Activated CD4-positive, alpha-beta memory T cell treated with anti-CD3 and anti-CD28 coated beads, Interleukin-2, amount 10 ng/mL, durations not matched to agents 7 days and 5 days (primary cell): ENCODE measurements at regions of chr11 and their contacts with region 1.

Region 1: GRCh38 chr11:4094348-4095291 is at the start of gene RRM1:
- DNase-seq: peak; percentile 94
- H3K4me3 Mint-ChIP-seq: peak within 1 kb of the TSS; percentile 99
- H3K27ac Mint-ChIP-seq: peak within 1 kb of the TSS; percentile 97
- H3K4me1 Mint-ChIP-seq: peaks cover 79% of the 10 kb centered on the region
- H3K27me3 Mint-ChIP-seq: no peaks in the 10 kb centered on the region
- total RNA-seq, gene RRM1: 156 to 161 TPM

Region 2: GRCh38 chr11:3849297-3849874 is 245.2 kb before region 1 on chr11:
- CTCF ChIA-PET with region 1: interaction called, 19 read pairs
- POLR2A ChIA-PET with region 1: interaction called, 79 read pairs
- DNase-seq: peak; percentile 48
- H3K4me3 Mint-ChIP-seq: no peak overlapping the region
- H3K27ac Mint-ChIP-seq: no peak overlapping the region
- H3K4me1 Mint-ChIP-seq: peaks cover 33% of the 10 kb centered on the region
- H3K27me3 Mint-ChIP-seq: peaks cover 3% of the 10 kb centered on the region

Region 3: DNA sequence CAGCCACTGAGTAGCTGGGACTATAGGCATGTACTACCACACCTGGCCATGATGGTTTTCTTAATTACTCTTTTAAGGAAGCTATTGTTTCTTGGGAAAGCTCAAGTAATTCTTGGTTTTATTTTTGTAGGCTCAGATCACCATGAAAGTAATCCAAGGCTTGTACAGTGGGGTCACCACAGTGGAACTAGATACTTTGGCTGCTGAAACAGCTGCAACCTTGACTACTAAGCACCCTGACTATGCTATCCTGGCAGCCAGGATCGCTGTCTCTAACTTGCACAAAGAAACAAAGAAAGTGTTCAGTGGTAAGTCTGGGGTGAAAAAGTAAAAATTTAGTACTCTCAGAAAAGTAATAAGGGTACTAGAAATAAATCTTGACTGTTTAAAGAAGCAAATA is 11.3 kb after region 1 on chr11:
- CTCF ChIA-PET with region 1: interaction called, 7 read pairs
- POLR2A ChIA-PET with region 1: interaction called, 13 read pairs
- DNase-seq: no peak
- H3K4me3 Mint-ChIP-seq: no peak overlapping the region
- H3K27ac Mint-ChIP-seq: no peak overlapping the region
- H3K4me1 Mint-ChIP-seq: peaks cover 28% of the 10 kb centered on the region
- H3K27me3 Mint-ChIP-seq: no peaks in the 10 kb centered on the region

Region 4: DNA sequence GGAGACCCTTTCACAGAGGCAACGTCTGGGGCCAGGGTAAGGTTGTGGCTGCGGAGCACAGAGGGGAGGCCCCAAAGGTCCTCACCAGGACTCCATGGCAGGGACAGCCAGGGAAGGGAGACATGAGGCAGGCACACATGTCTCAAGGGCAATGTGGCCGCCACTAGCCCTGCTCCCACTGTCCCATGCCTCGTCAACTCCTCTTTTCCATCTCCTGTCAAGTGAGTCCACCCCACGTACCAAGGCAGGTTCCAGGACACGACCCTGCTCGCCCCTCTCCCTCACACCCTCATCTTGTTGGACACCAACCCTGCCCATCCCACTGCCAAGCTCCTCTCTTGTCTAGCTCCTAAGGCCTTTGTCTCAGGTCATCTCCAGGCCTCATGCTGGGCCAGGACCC is 73.1 kb after region 1 on chr11:
- CTCF ChIA-PET with region 1: no interaction called
- POLR2A ChIA-PET with region 1: no interaction called
- DNase-seq: no peak
- H3K4me3 Mint-ChIP-seq: no peak overlapping the region
- H3K27ac Mint-ChIP-seq: no peak overlapping the region
- H3K4me1 Mint-ChIP-seq: no peaks in the 10 kb centered on the region
- H3K27me3 Mint-ChIP-seq: peaks cover 3% of the 10 kb centered on the region